Naive thymus-derived CD8-positive, alpha-beta T cell (primary cell): ENCODE measurements at regions of chr10 and their contacts with region 1.

Region 1: GRCh38 chr10:110304780-110305421 is at the start of gene SMNDC1:
- DNase-seq: peak; percentile 93 to 98 (median 97)
- ATAC-seq: peak; percentile 89 to 91
- H3K4me3 Mint-ChIP-seq: peak within 1 kb of the TSS; percentile 90 to 99 (median 96)
- H3K27ac Mint-ChIP-seq: peak within 1 kb of the TSS; percentile 97 to 100 (median 99)
- H3K4me1 Mint-ChIP-seq: peaks cover 18 to 59% (median 44%) of the 10 kb centered on the region in 4 donors
- H3K27me3 Mint-ChIP-seq: no peaks in the 10 kb centered on the region
- polyA plus RNA-seq, gene SMNDC1: 13.0 to 14.5 (median 13.0) TPM

Region 2: DNA sequence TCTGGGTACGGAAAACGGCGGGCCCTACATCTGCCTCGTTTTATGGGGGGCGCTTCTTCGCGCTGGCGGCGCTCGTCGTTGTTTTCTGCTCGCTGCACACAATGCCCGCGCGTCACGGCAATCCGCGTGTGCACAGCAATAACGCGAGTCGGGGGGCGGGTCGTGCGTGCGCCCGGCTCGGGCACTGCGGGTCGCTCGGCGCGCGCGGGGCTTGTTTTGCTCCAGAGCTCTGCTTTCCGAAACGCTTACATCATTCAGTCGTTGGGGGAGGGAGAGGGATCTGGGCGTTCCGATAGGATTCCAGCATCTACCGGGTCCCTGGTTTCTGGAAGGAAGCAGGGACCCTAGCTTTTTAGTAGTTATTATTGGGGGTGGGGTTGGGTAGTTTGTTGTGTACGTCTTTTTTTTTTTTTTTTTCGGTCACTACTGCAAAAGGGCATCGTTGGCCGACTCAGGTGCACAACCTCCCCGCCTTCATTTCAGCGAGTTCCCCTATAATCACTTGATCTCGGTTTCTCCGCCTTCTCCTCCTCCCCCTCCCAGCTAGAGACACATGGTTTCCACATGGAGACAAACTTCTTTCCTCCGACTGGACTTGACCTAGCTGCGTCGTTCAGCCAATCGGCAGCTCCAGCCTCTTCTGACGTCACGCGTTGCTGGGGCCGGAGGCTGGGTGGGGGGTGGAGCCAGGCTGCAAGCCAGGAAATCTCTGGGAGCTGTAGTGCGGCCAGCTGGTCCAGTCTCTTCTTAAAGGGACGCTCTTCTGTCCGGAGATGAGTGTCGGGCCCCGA is 94.0 kb before region 1 on chr10:
- POLR2A ChIA-PET with region 1: interaction called, 33 read pairs
- DNase-seq: peak; percentile 75 to 94 (median 86)
- ATAC-seq: peak; percentile 53 to 64
- H3K4me3 Mint-ChIP-seq: peak overlapping the region; percentile 85 to 98 (median 94)
- H3K27ac Mint-ChIP-seq: peak overlapping the region; percentile 86 to 98 (median 97)
- H3K4me1 Mint-ChIP-seq: peaks cover 36 to 67% (median 48%) of the 10 kb centered on the region in 4 donors
- H3K27me3 Mint-ChIP-seq: peaks cover 0 to 16% (median 15%) of the 10 kb centered on the region in 5 donors

Region 3: GRCh38 chr10:110252151-110252550 is 52.8 kb before region 1 on chr10:
- POLR2A ChIA-PET with region 1: no interaction called
- DNase-seq: no peak
- ATAC-seq: no peak
- H3K4me3 Mint-ChIP-seq: no peak overlapping the region
- H3K27ac Mint-ChIP-seq: no peak overlapping the region
- H3K4me1 Mint-ChIP-seq: peaks cover 0 to 28% (median 9%) of the 10 kb centered on the region in 4 donors
- H3K27me3 Mint-ChIP-seq: no peaks in the 10 kb centered on the region

Region 4: DNA sequence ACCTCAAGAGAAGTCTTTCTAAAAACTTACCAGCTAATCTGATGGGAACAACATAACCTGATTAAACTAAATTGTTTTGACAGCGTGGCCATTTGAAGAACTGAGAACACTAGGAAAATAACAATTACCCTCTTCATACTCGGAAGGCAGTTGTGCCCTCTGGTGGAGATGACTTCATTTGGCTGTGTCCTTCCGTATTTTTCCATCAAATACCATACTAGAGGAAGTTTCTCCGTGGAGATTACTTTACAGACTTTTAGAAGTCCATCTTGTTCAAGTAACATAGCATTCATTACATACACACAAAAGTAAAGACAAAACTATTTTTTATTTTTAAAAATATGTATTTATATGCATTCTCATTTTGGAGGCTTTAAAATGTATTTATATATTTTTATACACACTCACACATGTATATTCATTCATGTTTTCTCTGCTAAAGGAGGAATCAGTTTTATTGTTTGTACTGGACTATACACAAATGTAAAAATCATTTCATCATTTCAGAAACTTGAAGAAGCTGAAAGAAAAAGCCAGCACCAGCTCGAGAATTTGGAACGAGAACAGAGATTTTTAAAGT is 25.4 kb before region 1 on chr10:
- POLR2A ChIA-PET with region 1: no interaction called
- DNase-seq: peak in 9 of 10 donors; percentile 22 to 69 (median 46)
- ATAC-seq: peak; percentile 58 to 76
- H3K4me3 Mint-ChIP-seq: peak overlapping the region in 1 of 10 donors; percentile 4
- H3K27ac Mint-ChIP-seq: peak overlapping the region in 1 of 10 donors; percentile 31
- H3K4me1 Mint-ChIP-seq: peaks cover 4 to 17% (median 11%) of the 10 kb centered on the region in 4 donors
- H3K27me3 Mint-ChIP-seq: no peaks in the 10 kb centered on the region

Region 5: DNA sequence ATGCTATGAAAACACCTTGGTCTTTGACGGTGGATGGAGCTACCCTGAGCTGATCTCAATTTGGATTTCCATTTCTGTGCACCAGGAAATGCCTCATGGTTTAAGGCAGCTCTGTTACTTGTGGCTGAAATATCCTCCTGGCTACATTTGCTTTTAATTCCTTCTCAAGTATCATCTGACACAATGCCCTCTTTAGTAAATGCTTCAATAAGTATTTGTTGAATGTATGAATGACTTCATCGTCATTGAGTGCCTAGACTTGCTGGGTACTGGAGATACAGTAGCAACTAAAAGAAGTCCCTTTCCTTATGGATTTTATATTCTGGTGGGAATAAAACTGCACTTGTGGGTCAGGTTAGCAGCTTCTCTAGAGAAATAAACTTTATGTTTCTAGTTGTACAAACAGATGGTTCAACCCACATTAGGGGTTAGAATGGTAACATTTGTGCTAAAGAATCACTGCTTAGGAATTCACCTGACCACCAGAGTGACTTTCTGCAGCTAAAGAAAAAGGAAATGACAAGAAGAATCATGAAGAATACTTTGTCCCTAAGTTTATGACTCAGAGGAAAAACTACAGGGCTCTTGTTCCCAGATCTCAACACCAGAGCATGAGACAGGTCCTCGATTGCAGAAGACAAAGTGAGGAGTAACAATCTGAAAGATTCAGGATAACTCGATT is 21.6 kb after region 1 on chr10:
- POLR2A ChIA-PET with region 1: no interaction called
- DNase-seq: no peak
- ATAC-seq: no peak
- H3K4me3 Mint-ChIP-seq: no peak overlapping the region
- H3K27ac Mint-ChIP-seq: no peak overlapping the region
- H3K4me1 Mint-ChIP-seq: peaks cover 0 to 14% (median 0%) of the 10 kb centered on the region in 4 donors
- H3K27me3 Mint-ChIP-seq: peaks cover 0 to 6% (median 3%) of the 10 kb centered on the region in 5 donors

Region 6: DNA sequence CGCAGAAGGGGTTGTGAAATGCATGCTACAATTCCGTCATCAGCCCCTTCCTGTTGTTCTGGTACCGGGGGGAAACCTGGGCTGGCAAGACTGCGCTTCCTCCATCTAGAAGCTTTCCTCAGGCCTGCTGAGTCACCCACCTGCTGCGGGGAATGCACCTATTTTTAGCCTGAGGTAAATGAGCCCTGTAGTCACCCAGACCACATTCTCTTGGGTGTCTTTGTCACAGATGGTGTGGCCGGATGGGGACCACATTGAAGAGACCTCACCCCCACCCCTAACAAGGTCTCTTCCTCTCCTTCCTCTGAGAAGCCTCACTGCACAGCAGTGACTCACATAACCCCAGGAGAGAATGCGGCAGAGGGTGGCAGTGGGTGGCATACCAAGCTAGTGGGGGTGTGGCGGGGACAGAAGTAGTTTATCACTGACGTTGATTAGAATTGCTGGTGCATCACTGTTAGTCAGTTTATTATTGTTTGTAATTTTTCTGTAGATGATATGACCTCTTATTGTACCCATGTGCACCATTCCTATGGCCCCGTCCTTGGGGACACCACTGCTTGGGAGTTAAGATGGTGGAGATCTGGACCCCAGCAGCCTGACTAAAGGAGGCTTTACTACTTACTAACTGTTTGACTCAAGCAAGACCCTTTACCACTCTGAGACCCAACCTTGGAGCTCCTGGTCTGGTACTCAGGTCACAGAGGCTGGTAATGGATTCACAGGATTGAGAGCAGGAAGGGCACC is 109.8 kb after region 1 on chr10:
- POLR2A ChIA-PET with region 1: no interaction called
- DNase-seq: peak; percentile 31 to 92 (median 80)
- ATAC-seq: peak; percentile 96 to 97
- H3K4me3 Mint-ChIP-seq: peak overlapping the region; percentile 2 to 80 (median 58)
- H3K27ac Mint-ChIP-seq: peak overlapping the region; percentile 39 to 88 (median 78)
- H3K4me1 Mint-ChIP-seq: peaks cover 13 to 66% (median 21%) of the 10 kb centered on the region in 4 donors
- H3K27me3 Mint-ChIP-seq: peaks cover 0 to 7% (median 3%) of the 10 kb centered on the region in 5 donors

Region 7: GRCh38 chr10:110567201-110568054 is 262.5 kb after region 1 on chr10 and contains the start of gene SMC3:
- POLR2A ChIA-PET with region 1: interaction called, 11 read pairs
- DNase-seq: peak; percentile 81 to 98 (median 91)
- ATAC-seq: peak; percentile 85 to 86
- H3K4me3 Mint-ChIP-seq: peak within 1 kb of the TSS; percentile 92 to 99 (median 96)
- H3K27ac Mint-ChIP-seq: peak within 1 kb of the TSS; percentile 97 to 98 (median 98)
- H3K4me1 Mint-ChIP-seq: peaks cover 13 to 47% (median 36%) of the 10 kb centered on the region in 4 donors
- H3K27me3 Mint-ChIP-seq: peaks cover 6 to 18% (median 14%) of the 10 kb centered on the region in 5 donors
- polyA plus RNA-seq, gene SMC3: 66.7 to 77.6 (median 70.2) TPM